K562 (cell line): ENCODE measurements at regions of chr1 and their contacts with region 1.

Region 1: DNA sequence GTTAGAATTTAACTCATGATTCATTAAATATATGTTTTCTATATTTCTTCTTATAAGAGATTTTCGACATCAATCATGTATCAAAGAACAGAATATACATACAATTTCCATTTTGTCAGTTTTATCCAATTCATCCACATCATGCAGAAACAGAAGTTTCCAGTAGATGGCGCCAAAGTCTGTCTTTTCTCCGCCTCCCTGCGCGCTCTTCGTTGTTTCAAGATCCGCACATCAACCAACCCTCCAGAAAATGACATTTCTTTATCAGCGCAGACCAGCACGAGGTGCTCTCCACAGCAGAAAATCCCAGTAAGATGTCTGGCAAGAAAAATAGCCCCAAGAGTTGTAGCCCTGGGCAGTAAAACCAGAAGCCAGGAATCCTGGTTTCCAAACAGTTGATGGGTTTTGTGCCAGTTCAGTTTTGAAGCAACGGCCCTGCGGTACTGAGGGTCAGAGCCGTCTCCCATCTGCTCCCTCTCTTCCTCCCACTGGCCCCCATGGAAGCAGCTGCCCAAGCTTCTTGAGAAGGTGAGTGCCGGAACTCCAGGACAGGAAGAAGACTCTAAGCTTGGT is 38.6 kb upstream of the GPR137B start:
- DNase-seq: peak; percentile 77 to 86 (median 81)
- ATAC-seq: peak; percentile 85
- H3K4me3 ChIP-seq: no peak overlapping the region
- H3K27ac ChIP-seq: no peak overlapping the region
- H3K4me1 ChIP-seq: peaks cover 3% of the 10 kb centered on the region in 2 experiments; a peak in 3 of 5 replicates
- H3K27me3 ChIP-seq: peaks cover 0 to 30% of the 10 kb centered on the region in 2 experiments; a peak in 2 of 5 replicates
- CTCF ChIP-seq: peak; percentile 73 to 97 (median 89)
- EP300 ChIP-seq: no peak
- POLR2A ChIP-seq: no peak
- RAD21 ChIP-seq: peak; percentile 95 to 97

Region 2: GRCh38 chr1:236320671-236321070 is 216.9 kb after region 1 on chr1:
- CTCF ChIA-PET with region 1: no interaction called
- POLR2A ChIA-PET with region 1: no interaction called
- in situ Hi-C with region 1: no loop called
- intact Hi-C with region 1: no loop called
- DNase-seq: no peak
- ATAC-seq: no peak
- H3K4me3 ChIP-seq: no peak overlapping the region
- H3K27ac ChIP-seq: no peak overlapping the region
- H3K4me1 ChIP-seq: no peaks in the 10 kb centered on the region
- H3K27me3 ChIP-seq: no peaks in the 10 kb centered on the region
- CTCF ChIP-seq: no peak
- EP300 ChIP-seq: no peak
- POLR2A ChIP-seq: no peak
- RAD21 ChIP-seq: no peak

Region 3: GRCh38 chr1:236345728-236346127 is 242.0 kb after region 1 on chr1:
- CTCF ChIA-PET with region 1: no interaction called
- POLR2A ChIA-PET with region 1: no interaction called
- in situ Hi-C with region 1: no loop called
- intact Hi-C with region 1: loop called (anchors 5 kb)
- DNase-seq: peak in 2 of 4 experiments; percentile 39 to 50
- ATAC-seq: peak; percentile 55
- H3K4me3 ChIP-seq: no peak overlapping the region
- H3K27ac ChIP-seq: no peak overlapping the region
- H3K4me1 ChIP-seq: peaks cover 21 to 23% of the 10 kb centered on the region in 2 experiments
- H3K27me3 ChIP-seq: no peaks in the 10 kb centered on the region
- CTCF ChIP-seq: peak; percentile 40 to 72 (median 47); a peak in 5 of 6 replicates
- EP300 ChIP-seq: no peak
- POLR2A ChIP-seq: no peak
- RAD21 ChIP-seq: peak; percentile 36 to 66; a peak in 3 of 4 replicates

Region 4: GRCh38 chr1:236550961-236551851 is 447.5 kb after region 1 on chr1:
- CTCF ChIA-PET with region 1: no interaction called
- POLR2A ChIA-PET with region 1: no interaction called
- in situ Hi-C with region 1: no loop called
- intact Hi-C with region 1: loop called (anchors 2 kb)
- DNase-seq: peak in 1 of 4 experiments; percentile 33
- ATAC-seq: peak; percentile 58
- H3K4me3 ChIP-seq: no peak overlapping the region
- H3K27ac ChIP-seq: peak overlapping the region; percentile 41; the same call in 2 of the 3 replicates
- H3K4me1 ChIP-seq: peaks cover 0 to 5% of the 10 kb centered on the region in 2 experiments; a peak in 3 of 5 replicates
- H3K27me3 ChIP-seq: no peaks in the 10 kb centered on the region
- CTCF ChIP-seq: no peak
- EP300 ChIP-seq: peak; percentile 79
- POLR2A ChIP-seq: no peak
- RAD21 ChIP-seq: 0 out of 4 replicates have a peak, but pooled peaks of 1 of the 2 experiments have one; percentile 8

Region 5: DNA sequence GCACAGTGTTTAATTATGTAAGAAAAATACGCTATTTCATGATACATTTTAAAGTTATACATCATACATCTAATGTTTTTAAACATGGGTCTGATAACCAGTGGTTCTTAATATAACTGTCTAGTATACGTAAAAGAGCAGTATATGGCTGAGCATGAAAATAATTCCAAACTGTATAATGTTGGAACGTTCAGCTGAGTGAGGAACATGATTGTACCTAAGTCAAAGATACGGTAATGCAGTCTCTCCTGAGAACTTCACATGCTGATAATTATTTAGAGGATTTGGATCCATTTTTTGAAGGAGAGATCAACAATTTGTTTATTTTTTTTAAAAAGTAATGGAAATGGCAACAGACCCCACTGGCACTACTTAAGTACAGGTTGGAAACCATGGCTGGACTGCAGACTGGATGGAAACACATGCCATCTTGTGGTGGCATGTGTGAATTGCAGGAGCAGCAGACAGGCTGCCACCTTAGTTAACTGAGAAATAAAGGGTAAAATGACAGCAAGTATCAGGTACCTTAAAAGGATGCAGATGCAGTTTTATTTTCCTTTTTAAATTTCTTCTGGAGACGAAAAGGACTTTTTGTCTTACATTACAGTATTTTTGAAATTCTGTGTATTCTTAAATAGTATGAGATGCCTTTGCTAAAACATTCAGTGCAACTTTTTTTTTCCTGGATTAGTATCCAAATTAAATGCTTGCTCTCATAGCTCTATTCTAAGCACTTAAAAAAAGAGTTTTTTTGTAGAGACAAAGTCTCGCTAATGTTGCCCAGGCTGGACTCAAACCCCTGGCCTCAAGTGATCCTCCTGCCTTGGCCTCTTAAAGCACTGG is 765.1 kb after region 1 on chr1:
- CTCF ChIA-PET with region 1: interaction called, 8 read pairs
- POLR2A ChIA-PET with region 1: no interaction called
- in situ Hi-C with region 1: no loop called
- intact Hi-C with region 1: loop called (anchors 5 kb)
- DNase-seq: peak; percentile 69 to 82 (median 79)
- ATAC-seq: peak; percentile 95
- H3K4me3 ChIP-seq: no peak overlapping the region
- H3K27ac ChIP-seq: no peak overlapping the region
- H3K4me1 ChIP-seq: no peaks in the 10 kb centered on the region
- H3K27me3 ChIP-seq: no peaks in the 10 kb centered on the region
- CTCF ChIP-seq: peak; percentile 87 to 93 (median 92)
- EP300 ChIP-seq: no peak
- POLR2A ChIP-seq: no peak
- RAD21 ChIP-seq: peak; percentile 81 to 83

Region 6: DNA sequence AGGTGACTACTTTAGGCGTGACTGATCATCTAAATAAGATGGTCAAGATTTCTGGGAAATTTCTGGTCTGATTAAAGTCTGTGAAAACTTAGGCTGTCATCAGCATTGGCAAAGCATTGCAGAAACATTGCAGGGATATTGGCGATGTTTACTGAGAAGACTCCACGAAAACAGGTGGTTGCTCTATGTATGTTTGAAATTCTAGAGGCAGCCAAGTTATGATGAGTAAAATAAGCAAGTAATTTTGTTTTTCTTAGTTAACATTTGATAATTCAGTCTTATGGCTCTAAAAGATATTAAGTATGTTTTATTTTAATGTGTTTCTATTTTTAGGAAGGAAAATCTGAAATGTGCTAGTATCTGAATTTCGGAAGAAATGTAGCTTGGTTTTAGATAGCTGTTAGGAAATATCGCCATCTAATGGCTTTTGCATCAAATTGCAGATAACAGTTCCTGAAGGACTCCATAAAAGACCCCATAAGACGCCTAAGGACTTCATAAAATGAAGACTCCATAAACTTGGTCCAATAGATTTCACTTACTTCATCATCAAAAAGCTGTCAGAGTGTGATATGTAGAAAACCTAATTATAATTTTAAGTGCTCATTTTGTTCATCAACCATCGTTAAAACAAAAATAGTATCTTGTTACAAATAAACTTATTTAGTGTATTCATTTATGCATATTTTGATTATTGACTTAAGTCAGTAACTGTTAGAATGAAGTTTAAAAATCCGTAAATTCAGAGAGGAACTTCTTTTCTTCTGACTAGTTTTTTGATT is 1282.8 kb after region 1 on chr1:
- CTCF ChIA-PET with region 1: no interaction called
- POLR2A ChIA-PET with region 1: no interaction called
- in situ Hi-C with region 1: loop called (anchors 25 kb)
- intact Hi-C with region 1: loop called (anchors 1 kb)
- DNase-seq: peak; percentile 20 to 37 (median 30)
- ATAC-seq: peak; percentile 71
- H3K4me3 ChIP-seq: no peak overlapping the region
- H3K27ac ChIP-seq: no peak overlapping the region
- H3K4me1 ChIP-seq: no peaks in the 10 kb centered on the region
- H3K27me3 ChIP-seq: no peaks in the 10 kb centered on the region
- CTCF ChIP-seq: peak; percentile 42 to 76 (median 62); a peak in 5 of 6 replicates
- EP300 ChIP-seq: no peak
- POLR2A ChIP-seq: no peak
- RAD21 ChIP-seq: peak; percentile 86

Region 7: DNA sequence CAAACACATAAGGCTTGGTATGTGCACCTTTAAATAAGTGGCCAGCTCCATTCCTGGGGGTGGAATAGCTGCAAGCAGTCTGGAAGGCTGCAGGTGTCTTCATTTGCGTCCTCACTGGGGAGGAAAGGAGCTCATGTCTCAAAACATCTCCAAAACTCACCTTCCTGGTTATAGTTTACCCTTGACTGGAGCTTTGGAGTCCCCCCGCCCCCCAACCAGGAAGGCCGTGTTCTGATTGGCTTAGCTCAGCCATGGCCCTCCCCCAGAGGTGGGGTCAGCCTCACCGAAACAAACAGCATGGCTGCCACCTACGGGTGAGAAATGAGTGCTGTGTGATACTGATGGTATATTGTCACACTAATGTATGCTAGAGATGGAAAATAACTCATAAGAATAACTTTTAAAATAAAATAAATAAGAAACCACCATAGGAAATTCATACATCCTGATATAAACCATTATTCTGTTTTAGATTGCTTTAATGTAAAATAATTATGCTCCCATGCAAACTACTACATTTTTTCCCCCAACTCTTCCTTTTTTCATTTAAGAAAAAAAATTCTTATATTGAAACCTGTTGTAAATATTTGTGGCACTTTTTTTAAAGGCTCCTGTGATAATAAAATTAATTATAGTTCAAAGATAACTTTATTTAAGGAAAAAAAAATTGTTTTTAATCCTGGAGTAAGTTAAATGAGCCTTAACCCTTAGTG is 1696.2 kb after region 1 on chr1:
- CTCF ChIA-PET with region 1: no interaction called
- POLR2A ChIA-PET with region 1: no interaction called
- in situ Hi-C with region 1: no loop called
- intact Hi-C with region 1: loop called (anchors 10 kb)
- DNase-seq: peak; percentile 57 to 86 (median 80)
- ATAC-seq: peak; percentile 92
- H3K4me3 ChIP-seq: no peak overlapping the region
- H3K27ac ChIP-seq: no peak overlapping the region
- H3K4me1 ChIP-seq: no peaks in the 10 kb centered on the region
- H3K27me3 ChIP-seq: no peaks in the 10 kb centered on the region
- CTCF ChIP-seq: peak in 2 of 3 experiments; percentile 7 to 26; a peak in 2 of 6 replicates
- EP300 ChIP-seq: no peak
- POLR2A ChIP-seq: no peak
- RAD21 ChIP-seq: peak; percentile 18 to 48; a peak in 2 of 4 replicates